Endothelial cell of umbilical vein (primary cell): ENCODE measurements at regions of chr1 and their contacts with region 1.

Region 1: GRCh38 chr1:214404154-214404553 is 123.2 kb downstream of the SMYD2 start:
- DNase-seq: peak; percentile 90
- H3K4me3 ChIP-seq: peak overlapping the region in 1 of 3 experiments; percentile 39
- H3K27ac ChIP-seq: peak overlapping the region; percentile 99
- H3K4me1 ChIP-seq: peaks cover 35% of the 10 kb centered on the region
- H3K27me3 ChIP-seq: no peaks in the 10 kb centered on the region
- CTCF ChIP-seq: no peak
- POLR2A ChIP-seq: peak; percentile 53

Region 2: GRCh38 chr1:214271174-214271858 is 132.8 kb before region 1 on chr1:
- CTCF ChIA-PET with region 1: no interaction called
- POLR2A ChIA-PET with region 1: no interaction called
- dilution Hi-C with region 1: no loop called
- intact Hi-C with region 1: no loop called
- DNase-seq: no peak
- H3K4me3 ChIP-seq: no peak overlapping the region
- H3K27ac ChIP-seq: no peak overlapping the region
- H3K4me1 ChIP-seq: no peaks in the 10 kb centered on the region
- H3K27me3 ChIP-seq: peaks cover 9 to 21% of the 10 kb centered on the region in 2 experiments
- CTCF ChIP-seq: no peak
- POLR2A ChIP-seq: no peak

Region 3: DNA sequence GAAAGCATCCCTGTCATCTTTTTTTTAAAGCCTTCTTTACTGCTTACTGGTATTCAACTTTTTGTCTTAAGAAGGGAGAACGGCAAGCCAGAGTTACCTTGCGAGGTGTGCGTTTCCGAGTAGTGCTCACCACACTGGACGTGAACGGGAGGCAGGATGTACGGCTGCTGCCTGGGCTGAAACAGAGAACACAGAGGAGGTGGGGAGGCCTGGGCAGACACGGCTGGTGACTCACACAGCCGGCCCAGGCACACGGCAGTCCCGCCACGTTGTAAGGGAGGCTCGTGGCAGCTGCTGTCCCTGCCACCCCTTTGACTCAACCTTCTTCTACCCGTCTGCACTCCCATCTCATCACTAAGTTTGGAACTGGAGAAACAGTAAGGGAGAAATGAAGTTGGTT is 17.4 kb before region 1 on chr1:
- CTCF ChIA-PET with region 1: interaction called, 15 read pairs
- POLR2A ChIA-PET with region 1: no interaction called
- dilution Hi-C with region 1: no loop called
- intact Hi-C with region 1: no loop called
- DNase-seq: no peak
- H3K4me3 ChIP-seq: no peak overlapping the region
- H3K27ac ChIP-seq: no peak overlapping the region
- H3K4me1 ChIP-seq: no peaks in the 10 kb centered on the region
- H3K27me3 ChIP-seq: no peaks in the 10 kb centered on the region
- CTCF ChIP-seq: no peak
- POLR2A ChIP-seq: no peak

Region 4: GRCh38 chr1:214427871-214428277 is 23.7 kb after region 1 on chr1:
- CTCF ChIA-PET with region 1: interaction called, 6 read pairs
- POLR2A ChIA-PET with region 1: interaction called, 5 read pairs
- dilution Hi-C with region 1: no loop called
- intact Hi-C with region 1: loop called (anchors 1 kb)
- DNase-seq: peak; percentile 81
- H3K4me3 ChIP-seq: no peak overlapping the region
- H3K27ac ChIP-seq: peak overlapping the region; percentile 68
- H3K4me1 ChIP-seq: peaks cover 39% of the 10 kb centered on the region
- H3K27me3 ChIP-seq: no peaks in the 10 kb centered on the region
- CTCF ChIP-seq: no peak
- POLR2A ChIP-seq: peak; percentile 39

Region 5: DNA sequence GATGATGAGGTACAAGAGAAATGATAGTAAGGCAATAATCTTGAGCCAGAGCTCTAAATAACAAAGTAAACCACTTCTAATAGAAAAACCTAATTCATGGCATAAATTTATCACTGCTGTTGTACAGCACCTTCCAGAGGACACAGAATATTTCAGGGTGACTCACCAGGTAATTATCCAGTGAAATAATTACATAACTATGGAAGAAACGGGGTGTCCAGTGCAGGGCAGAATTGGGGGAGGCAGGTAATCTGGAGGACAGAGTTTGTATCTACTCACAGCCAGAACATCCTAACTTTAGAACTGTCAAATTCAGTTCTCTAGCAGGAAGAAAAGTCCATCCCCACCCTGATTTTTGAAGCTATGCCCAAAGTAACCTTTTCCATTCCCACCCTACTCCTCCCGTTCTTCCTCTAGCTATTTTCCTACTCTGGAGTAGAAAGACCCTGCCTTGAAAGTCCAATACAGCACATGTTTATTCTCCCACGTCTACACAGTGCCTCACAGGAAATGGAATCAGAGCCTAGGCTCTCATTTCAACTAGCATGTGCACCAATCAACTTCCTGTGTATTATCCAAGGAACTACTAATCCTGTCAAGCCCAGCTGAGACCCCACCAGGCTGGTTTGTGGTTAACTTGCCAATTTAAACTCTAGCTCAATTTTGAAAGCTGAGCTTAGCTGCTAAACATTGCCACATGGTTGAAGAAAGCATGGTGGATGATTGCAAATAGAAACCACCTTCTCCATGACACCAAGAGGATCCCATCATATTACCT is 50.7 kb after region 1 on chr1:
- CTCF ChIA-PET with region 1: interaction called, 10 read pairs
- POLR2A ChIA-PET with region 1: interaction called, 5 read pairs
- dilution Hi-C with region 1: no loop called
- intact Hi-C with region 1: loop called (anchors 1 kb)
- DNase-seq: peak; percentile 87
- H3K4me3 ChIP-seq: peak overlapping the region in 1 of 3 experiments; percentile 15
- H3K27ac ChIP-seq: peak overlapping the region; percentile 94
- H3K4me1 ChIP-seq: peaks cover 65% of the 10 kb centered on the region
- H3K27me3 ChIP-seq: no peaks in the 10 kb centered on the region
- CTCF ChIP-seq: no peak
- POLR2A ChIP-seq: peak; percentile 56

Region 6: GRCh38 chr1:214494706-214495105 is 90.6 kb after region 1 on chr1:
- CTCF ChIA-PET with region 1: interaction called, 4 read pairs
- POLR2A ChIA-PET with region 1: no interaction called
- dilution Hi-C with region 1: no loop called
- intact Hi-C with region 1: loop called (anchors 5 kb)
- DNase-seq: no peak
- H3K4me3 ChIP-seq: no peak overlapping the region
- H3K27ac ChIP-seq: no peak overlapping the region
- H3K4me1 ChIP-seq: peaks cover 19% of the 10 kb centered on the region
- H3K27me3 ChIP-seq: no peaks in the 10 kb centered on the region
- CTCF ChIP-seq: no peak
- POLR2A ChIP-seq: no peak

Region 7: DNA sequence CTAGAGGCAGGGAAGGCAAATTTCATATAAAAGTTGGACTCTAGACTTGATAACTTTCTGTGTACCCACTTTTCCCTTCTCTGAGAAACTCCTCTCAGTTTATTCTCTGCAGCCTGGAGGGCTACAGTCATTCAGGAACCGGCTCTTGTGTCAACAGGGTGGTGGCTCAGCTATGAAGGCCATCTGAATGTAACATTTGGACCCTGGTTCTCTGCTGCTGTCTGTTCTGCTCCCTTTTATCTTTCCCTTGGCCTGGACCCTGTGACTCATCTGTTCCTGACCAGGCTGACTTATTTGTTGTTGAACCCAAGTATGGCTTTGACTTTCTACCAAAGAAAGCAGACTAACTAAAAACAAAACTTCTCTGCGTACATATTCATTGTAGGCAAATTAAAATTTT is 274.2 kb after region 1 on chr1:
- CTCF ChIA-PET with region 1: no interaction called
- POLR2A ChIA-PET with region 1: no interaction called
- dilution Hi-C with region 1: no loop called
- intact Hi-C with region 1: no loop called
- DNase-seq: peak; percentile 9
- H3K4me3 ChIP-seq: no peak overlapping the region
- H3K27ac ChIP-seq: no peak overlapping the region
- H3K4me1 ChIP-seq: peaks cover 4% of the 10 kb centered on the region
- H3K27me3 ChIP-seq: no peaks in the 10 kb centered on the region
- CTCF ChIP-seq: no peak
- POLR2A ChIP-seq: no peak